ENCODE measurements at regions of chr16 and their contacts with region 1.

Region 1: DNA sequence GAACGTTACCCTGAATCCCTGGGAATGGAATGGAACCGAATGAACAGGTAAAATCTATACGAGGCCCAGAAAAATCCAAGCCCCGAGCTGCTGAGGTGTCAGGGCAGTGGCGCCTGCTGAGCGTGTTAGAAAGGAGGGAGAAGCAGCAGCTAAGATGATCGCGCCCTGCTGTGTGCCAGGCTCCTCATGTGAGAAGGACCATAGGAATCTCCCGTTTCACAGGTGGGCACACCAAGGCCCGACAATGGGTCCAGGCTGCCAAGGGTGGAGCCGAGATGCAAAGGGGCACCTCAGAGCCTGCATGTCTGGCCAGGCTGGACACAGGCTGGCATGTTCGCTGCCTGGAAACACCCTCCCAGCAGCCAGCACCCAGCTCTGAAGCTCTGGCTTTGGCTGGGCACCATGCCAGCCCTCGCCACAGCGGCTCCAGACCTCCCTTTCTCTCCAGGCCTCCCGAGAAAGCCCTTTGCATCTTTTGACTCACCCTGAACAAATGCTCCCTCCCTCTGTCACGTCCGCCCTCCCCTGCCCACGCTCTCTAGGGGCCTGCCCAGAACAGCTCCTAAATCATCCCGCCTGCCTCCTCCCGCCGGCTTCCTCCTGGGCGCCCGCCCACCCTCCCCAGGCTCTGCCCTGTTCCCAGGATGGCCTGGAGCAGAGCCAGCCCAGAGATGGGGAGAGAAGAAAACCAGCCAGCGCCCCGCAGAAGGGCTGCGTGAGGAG is 217.8 kb upstream of the GSE1 start:
- DNase-seq: peak in 1 of 2 experiments; percentile 25
- H3K4me3 ChIP-seq: no peak overlapping the region
- H3K4me3 Mint-ChIP-seq: no peak overlapping the region
- H3K27ac Mint-ChIP-seq: no peak overlapping the region
- H3K4me1 ChIP-seq: peaks cover 12% of the 10 kb centered on the region
- H3K4me1 Mint-ChIP-seq: peaks cover 7% of the 10 kb centered on the region
- H3K27me3 ChIP-seq: no peaks in the 10 kb centered on the region
- H3K27me3 Mint-ChIP-seq: no peaks in the 10 kb centered on the region
- CTCF ChIP-seq: no peak

Region 2: DNA sequence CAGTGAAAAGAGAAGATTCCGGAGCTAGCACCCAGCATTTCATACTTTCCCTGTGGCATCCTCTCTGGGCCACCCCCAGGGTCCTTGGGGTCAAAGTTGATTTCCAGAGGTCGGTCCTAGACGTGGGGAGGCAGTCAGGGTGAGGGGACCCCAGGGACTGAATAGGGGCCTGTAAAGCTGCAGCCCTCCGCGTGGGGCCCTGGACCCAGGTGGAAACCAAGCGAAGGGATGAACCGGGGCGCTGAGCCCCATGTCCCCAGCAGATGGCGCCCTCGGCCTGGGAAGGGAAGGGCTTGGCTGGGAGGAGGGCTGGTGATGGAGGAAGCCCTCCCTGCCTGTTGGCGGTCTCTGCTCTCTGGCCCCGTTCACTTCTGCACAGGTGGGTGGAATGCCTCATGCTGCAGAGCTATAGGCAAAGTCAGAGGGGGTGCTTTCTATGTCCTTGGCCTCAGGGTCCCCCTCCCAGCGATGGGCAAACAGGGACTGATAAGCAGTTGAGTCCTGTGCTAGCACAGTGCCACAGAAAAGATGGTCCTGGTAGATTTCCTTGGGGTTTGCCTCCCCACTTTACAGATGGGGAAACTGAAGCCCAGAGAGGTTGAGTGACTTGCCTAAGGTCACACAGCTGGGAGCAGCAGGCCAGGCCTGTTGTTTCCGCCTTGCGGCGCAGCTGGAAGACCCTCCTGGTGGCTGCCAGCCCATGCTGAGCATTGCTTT is 119.7 kb before region 1 on chr16:
- CTCF ChIA-PET with region 1: no interaction called
- POLR2A ChIA-PET with region 1: no interaction called
- intact Hi-C with region 1: loop called (anchors 2 kb)
- DNase-seq: peak; percentile 69 to 88
- H3K4me3 ChIP-seq: no peak overlapping the region
- H3K4me3 Mint-ChIP-seq: no peak overlapping the region
- H3K27ac Mint-ChIP-seq: no peak overlapping the region
- H3K4me1 ChIP-seq: no peaks in the 10 kb centered on the region
- H3K4me1 Mint-ChIP-seq: no peaks in the 10 kb centered on the region
- H3K27me3 ChIP-seq: no peaks in the 10 kb centered on the region
- H3K27me3 Mint-ChIP-seq: no peaks in the 10 kb centered on the region
- CTCF ChIP-seq: peak; percentile 97 to 98

Region 3: GRCh38 chr16:85330694-85331188 is 64.6 kb before region 1 on chr16:
- CTCF ChIA-PET with region 1: interaction called, 11 read pairs
- POLR2A ChIA-PET with region 1: no interaction called
- intact Hi-C with region 1: loop called (anchors 2 kb)
- DNase-seq: peak; percentile 72 to 81
- H3K4me3 ChIP-seq: no peak overlapping the region
- H3K4me3 Mint-ChIP-seq: no peak overlapping the region
- H3K27ac Mint-ChIP-seq: peak overlapping the region; percentile 8
- H3K4me1 ChIP-seq: peaks cover 44% of the 10 kb centered on the region
- H3K4me1 Mint-ChIP-seq: peaks cover 39% of the 10 kb centered on the region
- H3K27me3 ChIP-seq: no peaks in the 10 kb centered on the region
- H3K27me3 Mint-ChIP-seq: no peaks in the 10 kb centered on the region
- CTCF ChIP-seq: peak; percentile 74 to 81

Region 4: DNA sequence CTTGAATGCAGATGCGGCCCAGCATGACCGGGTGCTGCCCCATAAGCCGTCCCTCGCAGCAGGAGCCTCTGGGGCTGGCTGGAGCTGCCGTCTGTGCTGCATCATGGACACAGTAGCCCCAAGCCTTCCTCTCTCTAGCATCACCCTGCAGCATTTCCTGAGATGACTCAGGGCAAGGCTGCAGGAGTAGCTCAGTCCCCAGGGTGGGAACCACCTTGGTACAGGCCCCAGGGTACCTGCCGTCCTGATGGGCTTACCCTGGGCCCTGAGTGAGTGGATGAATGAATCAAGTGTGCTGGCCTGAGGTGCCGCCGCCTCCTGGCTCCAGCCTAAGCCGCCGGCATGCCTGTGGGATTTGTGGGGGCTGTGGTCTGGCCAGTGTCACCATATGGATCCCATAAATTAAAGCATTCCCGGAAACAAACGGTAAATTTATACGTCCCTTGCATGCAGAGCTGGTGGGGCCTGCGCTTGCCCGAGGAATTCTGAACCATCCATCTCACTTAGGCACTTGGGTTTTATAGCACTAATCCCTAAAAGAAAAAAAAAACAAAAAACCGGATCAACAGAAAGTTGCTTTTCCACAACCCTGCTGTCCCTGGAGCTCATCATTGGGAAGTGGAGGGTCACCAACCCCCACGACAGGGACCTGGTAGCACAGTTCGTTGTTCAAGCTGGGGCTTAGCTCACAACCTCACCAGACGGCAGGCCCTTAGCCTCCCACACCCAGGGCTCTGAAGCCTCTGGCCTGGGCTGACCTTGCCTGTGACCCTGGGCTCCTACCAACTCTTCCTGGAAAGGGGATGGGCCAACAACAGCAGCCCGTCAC is 40.5 kb before region 1 on chr16:
- CTCF ChIA-PET with region 1: interaction called, 10 read pairs
- POLR2A ChIA-PET with region 1: interaction called, 5 read pairs
- intact Hi-C with region 1: loop called (anchors 1 kb)
- DNase-seq: no peak
- H3K4me3 ChIP-seq: no peak overlapping the region
- H3K4me3 Mint-ChIP-seq: peak overlapping the region; percentile 23
- H3K27ac Mint-ChIP-seq: peak overlapping the region; percentile 88
- H3K4me1 ChIP-seq: peaks cover 51% of the 10 kb centered on the region
- H3K4me1 Mint-ChIP-seq: peaks cover 14% of the 10 kb centered on the region
- H3K27me3 ChIP-seq: no peaks in the 10 kb centered on the region
- H3K27me3 Mint-ChIP-seq: no peaks in the 10 kb centered on the region
- CTCF ChIP-seq: no peak

Region 5: DNA sequence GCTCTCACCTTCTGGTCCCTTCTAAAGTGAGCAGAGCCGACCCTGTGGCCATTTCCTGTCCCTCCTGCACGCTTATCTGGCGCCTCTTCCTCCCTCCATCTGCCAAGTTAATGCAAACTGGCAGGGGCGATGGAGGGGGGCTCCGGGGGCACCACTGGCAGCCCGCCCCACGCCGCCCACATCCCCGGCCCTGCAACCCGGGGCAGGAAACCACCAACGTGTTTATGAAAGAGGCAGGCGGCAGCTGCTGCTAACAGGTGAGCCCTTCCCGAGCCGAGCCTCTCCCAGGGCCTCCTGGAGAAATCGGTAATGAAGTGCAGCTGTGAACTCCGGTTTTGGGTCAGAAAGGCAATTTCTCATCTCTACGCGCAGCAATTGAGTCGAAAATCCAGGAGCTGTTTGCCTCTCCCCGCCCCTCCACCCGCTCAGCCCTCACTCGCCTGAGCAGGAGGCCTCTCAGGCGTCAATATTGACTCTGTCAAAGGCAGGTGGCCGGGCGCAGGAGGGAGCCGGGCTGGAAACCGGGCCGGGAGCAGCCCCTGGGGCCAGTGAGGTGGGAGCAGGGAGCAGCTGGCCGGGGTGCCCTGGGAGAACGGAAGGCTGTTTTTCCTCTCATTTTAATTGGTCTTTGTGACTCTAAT is 53.3 kb after region 1 on chr16:
- CTCF ChIA-PET with region 1: no interaction called
- POLR2A ChIA-PET with region 1: no interaction called
- intact Hi-C with region 1: loop called (anchors 1 kb)
- DNase-seq: peak; percentile 91 to 92
- H3K4me3 ChIP-seq: 0 out of 2 replicates have a peak overlapping the region, but pooled peaks have one; percentile 1
- H3K4me3 Mint-ChIP-seq: peak overlapping the region; percentile 57
- H3K27ac Mint-ChIP-seq: peak overlapping the region; percentile 77
- H3K4me1 ChIP-seq: peaks cover 45% of the 10 kb centered on the region
- H3K4me1 Mint-ChIP-seq: peaks cover 12% of the 10 kb centered on the region
- H3K27me3 ChIP-seq: no peaks in the 10 kb centered on the region
- H3K27me3 Mint-ChIP-seq: no peaks in the 10 kb centered on the region
- CTCF ChIP-seq: no peak

Region 6: GRCh38 chr16:85495823-85496538 is 100.6 kb after region 1 on chr16:
- CTCF ChIA-PET with region 1: no interaction called
- POLR2A ChIA-PET with region 1: no interaction called
- intact Hi-C with region 1: no loop called
- DNase-seq: no peak
- H3K4me3 ChIP-seq: no peak overlapping the region
- H3K4me3 Mint-ChIP-seq: no peak overlapping the region
- H3K27ac Mint-ChIP-seq: peak overlapping the region; percentile 42
- H3K4me1 ChIP-seq: peaks cover 27% of the 10 kb centered on the region
- H3K4me1 Mint-ChIP-seq: peaks cover 26% of the 10 kb centered on the region
- H3K27me3 ChIP-seq: no peaks in the 10 kb centered on the region
- H3K27me3 Mint-ChIP-seq: no peaks in the 10 kb centered on the region
- CTCF ChIP-seq: no peak

Region 7: DNA sequence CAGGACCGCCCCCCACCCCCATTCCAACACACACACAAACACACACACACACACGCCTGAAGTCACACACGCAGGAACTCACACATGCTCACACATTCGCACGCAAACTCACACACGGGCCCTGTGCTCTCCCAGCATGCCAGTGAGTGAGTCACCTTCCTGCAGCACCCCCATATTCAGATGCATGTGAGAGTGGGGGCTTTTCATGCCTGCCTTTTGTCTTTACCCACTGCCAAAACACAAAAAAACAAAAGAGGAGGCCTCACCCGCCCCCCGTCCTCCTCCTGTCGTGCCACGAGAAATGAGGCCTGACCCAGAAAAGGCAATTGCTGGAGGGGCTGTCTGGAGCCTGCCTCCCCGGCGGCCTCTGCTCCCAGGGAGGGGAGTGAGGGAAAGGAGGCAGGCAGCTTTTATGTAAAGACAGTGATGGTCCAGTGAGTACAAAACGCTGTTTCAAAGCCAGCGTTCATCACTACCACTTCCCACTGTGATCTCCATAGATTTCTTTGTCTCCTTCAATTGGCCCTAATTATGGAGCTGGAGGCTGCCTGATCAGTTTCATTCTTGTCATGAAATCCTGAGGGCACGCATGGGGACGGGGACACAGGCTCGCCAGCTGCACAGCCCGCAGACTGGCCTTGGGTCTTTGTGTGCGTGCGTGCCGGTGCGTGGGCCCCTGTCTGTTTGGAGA is 188.3 kb after region 1 on chr16:
- CTCF ChIA-PET with region 1: no interaction called
- POLR2A ChIA-PET with region 1: no interaction called
- intact Hi-C with region 1: no loop called
- DNase-seq: no peak
- H3K4me3 ChIP-seq: no peak overlapping the region
- H3K4me3 Mint-ChIP-seq: no peak overlapping the region
- H3K27ac Mint-ChIP-seq: no peak overlapping the region
- H3K4me1 ChIP-seq: peaks cover 10% of the 10 kb centered on the region
- H3K4me1 Mint-ChIP-seq: peaks cover 12% of the 10 kb centered on the region
- H3K27me3 ChIP-seq: no peaks in the 10 kb centered on the region
- H3K27me3 Mint-ChIP-seq: no peaks in the 10 kb centered on the region
- CTCF ChIP-seq: no peak

Measured in Caco-2 (cell line).